ENCODE measurements at regions of chr11 and their contacts with region 1.

Region 1: DNA sequence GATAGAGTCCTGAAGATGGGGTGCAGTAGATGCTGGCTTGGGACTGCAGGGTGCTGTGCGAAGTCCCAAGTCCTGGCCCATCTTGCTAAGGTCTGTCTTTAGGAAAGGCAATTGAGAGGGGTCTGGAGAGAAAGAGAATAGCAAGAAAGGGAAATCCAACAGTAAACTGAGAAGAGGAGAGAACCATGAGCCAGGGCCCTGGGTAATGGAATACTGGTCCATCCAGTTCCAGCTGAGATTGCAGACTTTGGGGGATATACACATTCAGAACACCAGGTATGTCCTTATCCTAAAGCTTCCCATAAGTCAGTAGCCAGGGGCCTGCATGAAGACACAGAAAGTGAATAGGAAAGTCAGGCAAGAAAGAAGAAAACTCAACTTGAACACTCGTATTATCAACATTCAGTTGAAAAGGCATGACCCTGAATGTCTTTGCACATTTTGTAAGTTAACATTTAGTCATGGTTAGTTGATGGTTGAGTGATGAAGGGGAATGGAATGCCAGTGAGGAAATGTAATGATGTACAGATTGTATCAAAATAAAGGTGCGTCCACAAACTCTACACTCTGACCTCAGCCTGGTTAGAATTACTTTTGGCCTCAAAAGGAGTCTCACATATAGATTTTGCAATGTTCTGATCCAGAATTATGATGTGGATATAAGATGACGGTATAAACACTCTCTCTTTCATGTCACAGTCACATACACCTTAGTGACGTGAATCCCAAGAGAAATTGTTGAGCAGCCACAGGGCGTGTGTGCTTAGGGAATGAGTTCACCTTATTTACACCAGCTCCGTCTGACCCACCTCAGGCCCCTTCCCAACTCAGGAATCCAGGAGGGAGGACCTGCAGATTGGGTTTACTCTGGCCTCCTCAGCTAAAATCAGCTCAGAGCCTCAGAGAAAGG is 100.3 kb downstream of the RDX start:
- DNase-seq: no peak
- ATAC-seq: no peak
- H3K4me3 ChIP-seq: no peak overlapping the region
- H3K4me3 Mint-ChIP-seq: no peak overlapping the region
- H3K27ac ChIP-seq: no peak overlapping the region
- H3K27ac Mint-ChIP-seq: no peak overlapping the region
- H3K4me1 ChIP-seq: no peaks in the 10 kb centered on the region
- H3K4me1 Mint-ChIP-seq: peaks cover 10% of the 10 kb centered on the region
- H3K27me3 ChIP-seq: no peaks in the 10 kb centered on the region
- H3K27me3 Mint-ChIP-seq: no peaks in the 10 kb centered on the region
- CTCF ChIP-seq: no peak

Region 2: GRCh38 chr11:110217223-110217877 is 21.2 kb after region 1 on chr11:
- CTCF ChIA-PET with region 1: interaction called, 13 read pairs
- POLR2A ChIA-PET with region 1: no interaction called
- intact Hi-C with region 1: no loop called
- DNase-seq: no peak
- ATAC-seq: no peak
- H3K4me3 ChIP-seq: no peak overlapping the region
- H3K4me3 Mint-ChIP-seq: no peak overlapping the region
- H3K27ac ChIP-seq: no peak overlapping the region
- H3K27ac Mint-ChIP-seq: no peak overlapping the region
- H3K4me1 ChIP-seq: no peaks in the 10 kb centered on the region
- H3K4me1 Mint-ChIP-seq: no peaks in the 10 kb centered on the region
- H3K27me3 ChIP-seq: no peaks in the 10 kb centered on the region
- H3K27me3 Mint-ChIP-seq: no peaks in the 10 kb centered on the region
- CTCF ChIP-seq: no peak

Region 3: DNA sequence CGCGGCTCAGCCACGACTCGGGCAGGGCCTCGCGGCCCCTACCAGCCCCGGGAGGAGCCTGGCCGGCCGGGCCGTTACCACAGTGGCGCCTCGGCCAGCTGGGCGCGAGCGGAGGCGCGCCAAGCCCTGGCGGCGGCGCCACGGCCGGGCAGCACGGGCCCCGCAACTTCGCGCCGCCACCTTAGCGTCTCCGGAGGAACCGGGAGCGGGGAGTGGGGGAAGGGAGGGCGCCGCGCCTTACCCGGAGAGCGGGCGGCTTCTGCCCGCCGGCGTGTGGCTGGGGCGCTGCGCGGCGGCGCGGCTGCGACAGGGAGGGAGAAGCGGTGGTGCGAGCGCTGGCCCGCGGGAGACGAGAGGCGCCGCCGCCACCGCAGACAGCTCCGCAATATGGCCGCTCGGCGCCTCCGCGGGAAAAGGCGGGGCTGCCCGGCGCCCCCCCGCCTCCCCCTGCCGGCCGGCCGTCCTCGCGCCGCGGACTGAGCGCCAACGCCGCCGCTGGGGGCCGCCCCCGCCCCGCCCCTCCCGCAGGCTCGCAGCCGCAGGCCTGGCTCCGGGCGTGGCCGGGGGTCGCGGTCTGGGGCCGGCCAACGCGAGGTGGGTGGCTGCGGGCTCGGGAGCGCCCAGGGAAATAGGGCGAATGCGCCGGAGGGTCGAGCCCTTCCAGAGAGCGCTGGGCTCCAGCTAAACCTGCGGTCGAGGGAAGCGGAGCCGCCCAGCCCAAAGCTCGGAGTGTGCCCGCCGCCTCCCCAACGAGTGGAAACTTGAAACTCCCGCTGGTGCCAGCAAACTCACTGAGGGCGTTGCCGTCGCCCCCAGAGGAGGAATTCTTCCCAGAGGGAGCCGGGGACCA is 100.4 kb after region 1 on chr11 and contains the start of gene RDX:
- CTCF ChIA-PET with region 1: interaction called, 5 read pairs
- POLR2A ChIA-PET with region 1: no interaction called
- intact Hi-C with region 1: loop called in 1 of 2 experiments (anchors 2 kb)
- DNase-seq: peak; percentile 15 to 79 (median 46)
- ATAC-seq: peak; percentile 61
- H3K4me3 ChIP-seq: peak within 1 kb of the TSS; percentile 73 to 86
- H3K4me3 Mint-ChIP-seq: peak within 1 kb of the TSS; percentile 90
- H3K27ac ChIP-seq: peak within 1 kb of the TSS in 1 of 2 experiments; percentile 42
- H3K27ac Mint-ChIP-seq: peak within 1 kb of the TSS; percentile 75
- H3K4me1 ChIP-seq: peaks cover 7% of the 10 kb centered on the region
- H3K4me1 Mint-ChIP-seq: peaks cover 22% of the 10 kb centered on the region
- H3K27me3 ChIP-seq: no peaks in the 10 kb centered on the region
- H3K27me3 Mint-ChIP-seq: no peaks in the 10 kb centered on the region
- CTCF ChIP-seq: no peak
- total RNA-seq, gene RDX: 7.7 to 7.9 TPM

Region 4: GRCh38 chr11:110376711-110377324 is 180.7 kb after region 1 on chr11:
- CTCF ChIA-PET with region 1: interaction called, 54 read pairs
- POLR2A ChIA-PET with region 1: no interaction called
- intact Hi-C with region 1: loop called (anchors 1 kb)
- DNase-seq: peak in 5 of 9 experiments; percentile 2 to 67 (median 13)
- ATAC-seq: no peak
- H3K4me3 ChIP-seq: no peak overlapping the region
- H3K4me3 Mint-ChIP-seq: no peak overlapping the region
- H3K27ac ChIP-seq: no peak overlapping the region
- H3K27ac Mint-ChIP-seq: no peak overlapping the region
- H3K4me1 ChIP-seq: no peaks in the 10 kb centered on the region
- H3K4me1 Mint-ChIP-seq: peaks cover 4% of the 10 kb centered on the region
- H3K27me3 ChIP-seq: no peaks in the 10 kb centered on the region
- H3K27me3 Mint-ChIP-seq: peaks cover 3% of the 10 kb centered on the region
- CTCF ChIP-seq: peak; percentile 77

Region 5: DNA sequence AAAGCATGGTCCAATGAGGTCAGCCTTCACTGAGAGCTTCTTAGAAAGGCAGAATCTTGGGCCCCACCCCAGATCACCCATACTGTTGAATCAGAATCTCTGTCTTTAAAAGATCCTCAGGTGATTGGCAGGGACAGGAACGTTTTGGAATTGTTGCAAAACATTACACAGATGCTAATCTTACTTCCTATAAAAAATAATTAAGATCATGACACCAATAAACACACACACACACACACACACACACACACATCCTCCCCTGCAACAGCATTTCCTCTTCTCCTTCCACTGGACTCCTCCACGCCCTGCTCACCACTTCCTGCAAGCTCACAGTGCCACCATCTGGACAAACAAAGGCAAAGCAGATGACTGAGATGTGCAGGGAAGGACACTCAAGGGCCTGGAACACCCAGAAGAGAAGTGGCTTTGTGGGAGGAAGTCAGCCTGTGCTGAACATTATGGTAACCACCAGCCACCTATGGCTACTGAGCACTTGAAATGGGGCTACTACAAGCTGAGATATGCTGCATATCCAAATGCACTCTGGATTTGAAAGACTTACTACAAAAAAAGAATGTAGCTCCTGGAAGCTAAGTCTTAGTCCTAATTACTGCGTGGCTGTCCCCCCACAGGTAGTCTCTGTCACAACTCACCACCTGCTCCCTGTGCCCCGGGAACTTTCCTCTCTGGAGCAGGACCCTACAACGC is 1250.5 kb after region 1 on chr11:
- CTCF ChIA-PET with region 1: no interaction called
- POLR2A ChIA-PET with region 1: no interaction called
- intact Hi-C with region 1: loop called in 1 of 2 experiments (anchors 5 kb)
- DNase-seq: peak; percentile 42 to 93 (median 78)
- ATAC-seq: peak; percentile 99
- H3K4me3 ChIP-seq: no peak overlapping the region
- H3K4me3 Mint-ChIP-seq: no peak overlapping the region
- H3K27ac ChIP-seq: peak overlapping the region in 1 of 2 experiments; percentile 54
- H3K27ac Mint-ChIP-seq: no peak overlapping the region
- H3K4me1 ChIP-seq: peaks cover 13% of the 10 kb centered on the region
- H3K4me1 Mint-ChIP-seq: peaks cover 12% of the 10 kb centered on the region
- H3K27me3 ChIP-seq: no peaks in the 10 kb centered on the region
- H3K27me3 Mint-ChIP-seq: no peaks in the 10 kb centered on the region
- CTCF ChIP-seq: peak; percentile 59